HCT116 (cell line): ENCODE measurements at regions of chr13 and their contacts with region 1.

Region 1: DNA sequence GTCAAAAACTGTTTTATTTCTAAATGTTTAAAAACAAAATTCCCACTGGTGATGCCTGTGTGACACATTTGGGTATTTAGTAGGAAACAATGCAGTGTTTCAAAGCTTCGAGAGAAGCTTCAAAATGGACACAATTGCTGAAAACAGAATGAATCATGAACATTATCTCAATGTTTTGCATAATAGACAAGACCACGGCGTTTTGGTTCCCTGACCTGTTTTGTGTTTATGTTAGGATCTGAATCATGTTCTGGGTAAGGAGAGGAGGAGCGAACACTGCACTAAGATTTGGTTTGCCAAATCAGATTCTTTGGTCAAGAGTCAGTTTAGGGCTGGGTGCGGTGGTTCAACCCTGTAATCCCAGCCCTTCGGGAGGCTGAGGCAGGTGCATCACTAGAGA is 42.2 kb downstream of the IFT88 start:
- DNase-seq: no peak
- ATAC-seq: no peak
- H3K4me3 ChIP-seq: no peak overlapping the region
- H3K27ac ChIP-seq: no peak overlapping the region
- H3K4me1 ChIP-seq: no peaks in the 10 kb centered on the region
- H3K27me3 ChIP-seq: no peaks in the 10 kb centered on the region
- CTCF ChIP-seq: no peak
- POLR2A ChIP-seq: no peak
- RAD21 ChIP-seq: no peak

Region 2: DNA sequence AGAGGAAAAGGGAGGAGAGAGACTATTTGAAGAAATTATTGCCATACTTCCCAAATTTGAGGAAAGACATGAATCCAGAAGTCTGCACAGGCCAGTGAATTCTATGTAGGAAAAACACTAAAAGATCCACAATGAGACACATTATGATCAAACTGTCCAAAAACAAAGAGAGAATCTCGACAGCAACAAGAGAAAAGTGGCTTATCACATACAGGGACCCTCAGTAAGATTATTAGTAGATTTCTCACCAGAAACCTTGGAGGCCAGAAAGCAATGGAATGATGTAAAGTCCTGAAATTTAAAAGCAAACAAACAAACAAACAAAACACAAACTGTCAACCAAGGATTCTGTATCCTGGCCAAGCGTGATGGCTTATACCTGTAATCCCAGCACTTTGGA is 38.6 kb after region 1 on chr13:
- CTCF ChIA-PET with region 1: no interaction called
- POLR2A ChIA-PET with region 1: no interaction called
- RAD21 ChIA-PET with region 1: no interaction called
- intact Hi-C with region 1: loop called (anchors 5 kb)
- DNase-seq: no peak
- ATAC-seq: no peak
- H3K4me3 ChIP-seq: no peak overlapping the region
- H3K27ac ChIP-seq: no peak overlapping the region
- H3K4me1 ChIP-seq: no peaks in the 10 kb centered on the region
- H3K27me3 ChIP-seq: no peaks in the 10 kb centered on the region
- CTCF ChIP-seq: no peak
- POLR2A ChIP-seq: no peak
- RAD21 ChIP-seq: no peak

Region 3: DNA sequence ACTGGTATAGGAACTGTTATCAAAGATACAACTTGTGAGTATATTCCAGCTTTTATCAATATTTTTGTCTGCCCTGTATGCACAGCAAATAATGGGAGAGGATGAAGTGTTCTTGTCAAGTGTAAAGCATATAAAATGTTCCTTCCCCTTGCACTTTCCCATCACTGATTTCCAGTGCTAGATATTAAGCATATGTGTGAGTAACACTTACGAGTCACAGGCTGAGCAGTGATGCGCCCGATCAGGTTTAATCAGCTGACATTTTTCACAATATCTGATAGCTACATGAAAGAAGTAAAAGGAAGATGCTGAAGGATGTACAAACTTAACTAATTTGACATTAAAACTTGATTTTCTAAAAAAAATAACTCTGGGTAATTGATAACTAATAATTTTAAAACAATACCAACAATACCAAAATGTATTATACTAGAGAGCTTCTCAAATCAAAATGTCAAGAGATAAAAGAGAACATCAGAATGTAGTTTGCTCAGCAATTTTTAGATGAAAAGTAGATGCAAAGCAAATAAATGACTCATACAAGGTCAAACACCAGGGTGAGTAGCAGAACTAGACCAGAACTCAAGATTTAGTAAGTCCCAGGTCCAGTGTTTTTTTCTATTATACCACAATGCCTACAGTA is 793.6 kb after region 1 on chr13:
- CTCF ChIA-PET with region 1: no interaction called
- POLR2A ChIA-PET with region 1: no interaction called
- RAD21 ChIA-PET with region 1: no interaction called
- intact Hi-C with region 1: no loop called
- DNase-seq: peak; percentile 22
- ATAC-seq: peak; percentile 70
- H3K4me3 ChIP-seq: no peak overlapping the region
- H3K27ac ChIP-seq: peak overlapping the region; percentile 25; the same call in 1 of the 2 replicates
- H3K4me1 ChIP-seq: peaks cover 41 to 45% of the 10 kb centered on the region in 2 experiments
- H3K27me3 ChIP-seq: no peaks in the 10 kb centered on the region
- CTCF ChIP-seq: no peak
- POLR2A ChIP-seq: no peak
- RAD21 ChIP-seq: no peak

Region 4: DNA sequence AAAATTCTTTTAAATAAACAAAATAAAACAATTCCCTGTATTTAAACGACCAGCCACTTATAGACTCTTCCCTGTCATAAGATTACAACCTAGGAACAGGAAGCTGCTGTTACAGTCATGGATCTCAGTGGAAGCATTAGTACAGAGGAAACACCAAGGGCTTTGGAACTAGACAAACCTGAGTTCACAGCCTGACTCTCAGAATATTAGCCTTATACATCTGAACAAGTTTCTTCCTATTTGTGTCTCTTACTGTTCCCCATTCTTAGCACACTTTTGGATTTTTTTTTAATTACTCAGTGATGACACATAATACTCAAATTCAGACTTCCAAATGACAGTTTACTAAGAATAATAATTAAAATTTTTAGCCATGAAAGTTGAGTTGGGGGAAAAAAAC is 803.9 kb after region 1 on chr13:
- CTCF ChIA-PET with region 1: no interaction called
- POLR2A ChIA-PET with region 1: no interaction called
- RAD21 ChIA-PET with region 1: no interaction called
- intact Hi-C with region 1: no loop called
- DNase-seq: no peak
- ATAC-seq: no peak
- H3K4me3 ChIP-seq: no peak overlapping the region
- H3K27ac ChIP-seq: no peak overlapping the region
- H3K4me1 ChIP-seq: no peaks in the 10 kb centered on the region
- H3K27me3 ChIP-seq: no peaks in the 10 kb centered on the region
- CTCF ChIP-seq: no peak
- POLR2A ChIP-seq: no peak
- RAD21 ChIP-seq: no peak